ENCODE measurements at regions of chr6 and their contacts with region 1.

Region 1: GRCh38 chr6:33200219-33201146 is at the starts of genes RXRB and SLC39A7:
- DNase-seq: peak; percentile 95 to 99 (median 98)
- H3K4me3 ChIP-seq: peak within 1 kb of the TSS; percentile 66 to 99 (median 87)
- H3K27ac ChIP-seq: peak within 1 kb of the TSS; percentile 95 to 100 (median 99)
- H3K27me3 ChIP-seq: no peaks in the 10 kb centered on the region
- CTCF ChIP-seq: peak in 28 of 56 donors; percentile 5 to 61 (median 23)
- total RNA-seq, gene RXRB: 47.2 to 81.0 (median 62.9) TPM
- total RNA-seq, gene SLC39A7: 23.7 to 48.3 (median 35.6) TPM

Region 2: GRCh38 chr6:33118525-33119123 is 81.9 kb before region 1 on chr6:
- intact Hi-C with region 1: loop called in 1 of 2 experiments (anchors 2 kb)
- DNase-seq: no peak
- H3K4me3 ChIP-seq: peak overlapping the region in 6 of 59 donors; percentile 47 to 59 (median 54)
- H3K27ac ChIP-seq: no peak overlapping the region
- H3K27me3 ChIP-seq: peaks cover 0 to 42% (median 25%) of the 10 kb centered on the region in 45 donors
- CTCF ChIP-seq: peak; percentile 73 to 97 (median 91)

Region 3: DNA sequence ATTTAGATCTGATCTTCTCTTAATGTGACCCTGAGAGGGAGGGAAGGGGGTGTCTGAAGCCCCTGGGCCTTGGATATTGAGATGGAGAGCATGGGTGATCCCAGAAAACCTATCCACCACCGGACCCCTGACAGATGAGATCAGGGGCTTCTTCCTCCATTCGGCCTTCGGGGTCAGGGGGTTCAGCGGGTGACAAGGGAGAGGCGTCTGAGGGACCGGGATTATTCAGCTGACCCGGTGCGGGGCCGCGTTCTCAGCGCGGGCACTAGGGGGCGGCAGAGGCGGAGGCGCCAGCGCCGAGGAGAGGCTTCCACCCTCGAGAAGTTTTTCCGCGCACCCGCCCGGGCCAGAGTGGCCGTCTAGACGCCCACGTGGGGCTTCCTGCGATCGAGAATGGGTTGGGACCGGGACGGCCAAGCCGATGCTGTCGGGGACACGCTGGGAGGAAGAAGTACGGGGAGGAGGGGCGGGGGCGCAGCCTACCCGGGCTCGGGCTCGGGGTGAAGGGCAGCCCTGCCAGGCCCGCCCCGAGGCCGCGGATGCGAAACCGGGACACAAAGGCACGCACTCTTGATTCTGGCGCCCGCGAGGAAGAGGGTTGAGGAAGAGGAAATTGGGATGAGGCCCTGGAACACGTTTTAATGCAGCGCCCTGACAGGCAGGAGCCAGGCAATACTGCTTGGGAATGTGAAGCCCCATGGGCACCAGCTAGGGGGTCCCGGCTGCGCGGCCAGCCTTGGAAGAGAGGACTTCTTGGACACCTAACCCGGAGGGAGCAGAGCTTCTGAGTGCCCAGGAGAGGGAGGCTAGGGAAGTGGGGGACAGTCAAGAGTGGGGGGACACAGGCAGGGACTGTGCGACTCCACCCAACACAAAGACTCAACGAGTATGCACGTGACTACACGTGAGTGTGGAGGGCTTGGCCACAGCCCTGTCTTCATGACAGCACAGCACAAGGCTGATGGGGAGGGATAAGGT is 38.8 kb before region 1 on chr6:
- intact Hi-C with region 1: loop called (anchors 1 to 5 kb)
- DNase-seq: peak; percentile 56 to 88 (median 72)
- H3K4me3 ChIP-seq: peak overlapping the region; percentile 35 to 69 (median 54)
- H3K27ac ChIP-seq: peak overlapping the region in 13 of 59 donors; percentile 0 to 62 (median 24)
- H3K27me3 ChIP-seq: no peaks in the 10 kb centered on the region
- CTCF ChIP-seq: peak; percentile 69 to 97 (median 91)

Region 4: DNA sequence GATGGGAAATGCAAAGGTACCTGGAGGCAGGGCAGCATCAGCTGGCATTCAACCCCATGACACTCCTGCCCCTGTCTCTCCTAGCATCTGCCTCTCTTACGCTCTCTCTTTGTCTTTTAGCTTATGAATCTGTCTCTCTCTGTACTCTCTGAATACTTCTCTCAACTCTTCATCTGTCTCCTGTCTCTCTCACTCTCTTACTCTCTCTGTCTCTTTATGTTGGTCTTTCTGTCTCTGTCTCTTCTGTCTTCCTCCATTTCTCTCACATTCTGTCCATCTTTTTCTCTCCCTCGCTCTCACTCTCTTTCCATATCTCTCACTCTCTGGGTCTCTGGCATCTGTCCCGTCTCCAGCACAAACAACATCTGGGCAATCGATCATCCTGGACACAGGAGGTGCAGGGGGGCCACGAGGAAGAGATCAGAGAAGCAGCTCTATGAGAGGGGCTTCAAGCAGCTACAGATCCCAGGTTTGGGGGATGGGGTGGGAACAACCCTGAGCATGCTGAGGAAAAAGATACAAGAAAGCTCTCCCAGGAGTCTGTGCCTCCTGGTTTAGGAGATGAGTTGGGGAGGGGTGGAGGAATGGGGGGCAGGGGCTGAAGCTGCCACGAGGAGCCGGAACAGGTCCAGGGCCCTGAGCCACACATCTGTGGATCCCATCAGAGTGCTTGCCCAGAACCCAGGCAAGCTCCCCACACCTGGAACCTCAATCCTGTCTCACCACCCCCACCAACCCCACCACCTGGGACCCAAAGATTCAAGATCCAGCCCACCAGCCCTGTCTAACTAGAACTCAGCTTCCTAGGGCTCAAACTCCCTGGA is 10.6 kb before region 1 on chr6:
- intact Hi-C with region 1: no loop called
- DNase-seq: no peak
- H3K4me3 ChIP-seq: no peak overlapping the region
- H3K27ac ChIP-seq: peak overlapping the region in 6 of 59 donors; percentile 3 to 97 (median 58)
- H3K27me3 ChIP-seq: no peaks in the 10 kb centered on the region
- CTCF ChIP-seq: no peak

Region 5: GRCh38 chr6:33417903-33418689 is 217.6 kb after region 1 on chr6 and contains the start of gene CUTA:
- intact Hi-C with region 1: loop called in 1 of 2 experiments (anchors 10 kb)
- DNase-seq: peak; percentile 100
- H3K4me3 ChIP-seq: peak within 1 kb of the TSS; percentile 57 to 97 (median 86)
- H3K27ac ChIP-seq: peak within 1 kb of the TSS; percentile 52 to 99 (median 97)
- H3K27me3 ChIP-seq: no peaks in the 10 kb centered on the region
- CTCF ChIP-seq: peak in 55 of 56 donors; percentile 31 to 79 (median 62)
- total RNA-seq, gene CUTA: 118 to 222 (median 177) TPM